Thyroid gland (tissue), 4 donors: ENCODE measurements at regions of chr2 and their contacts with region 1.

Region 1: DNA sequence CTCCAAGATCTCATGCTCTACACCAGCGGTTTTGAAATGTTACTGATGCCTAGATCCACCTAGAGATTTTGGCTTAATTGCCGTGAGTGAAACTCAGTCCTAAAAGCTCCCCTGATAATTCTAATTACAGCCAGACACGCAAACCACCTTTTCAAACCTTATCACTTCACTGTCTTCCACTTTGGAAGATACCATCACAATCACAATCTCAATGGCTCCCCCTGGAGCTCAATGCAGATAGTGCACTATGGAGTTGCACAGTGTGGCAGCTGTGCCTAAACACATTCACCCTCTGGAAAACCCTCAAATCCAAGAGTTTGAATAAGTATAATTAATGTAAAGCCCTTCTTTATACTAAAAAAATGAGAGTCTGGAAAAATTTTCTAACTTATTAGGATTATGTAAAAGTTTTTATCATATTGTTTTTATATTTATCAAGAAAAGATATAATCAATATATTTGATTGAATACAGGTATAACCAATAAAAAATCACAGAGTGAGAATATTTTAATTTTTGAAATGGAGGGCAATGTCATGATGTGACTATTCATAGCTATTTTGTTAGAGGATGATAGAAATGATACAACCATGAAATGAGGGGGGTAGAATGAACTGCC is 102.9 kb upstream of the SLC8A1 start:
- DNase-seq: peak; percentile 65 to 72
- H3K4me3 ChIP-seq: no peak overlapping the region
- H3K27ac ChIP-seq: no peak overlapping the region
- H3K4me1 ChIP-seq: no peaks in the 10 kb centered on the region
- H3K27me3 ChIP-seq: no peaks in the 10 kb centered on the region
- CTCF ChIP-seq: peak; percentile 56 to 92 (median 82)
- POLR2A ChIP-seq: no peak

Region 2: DNA sequence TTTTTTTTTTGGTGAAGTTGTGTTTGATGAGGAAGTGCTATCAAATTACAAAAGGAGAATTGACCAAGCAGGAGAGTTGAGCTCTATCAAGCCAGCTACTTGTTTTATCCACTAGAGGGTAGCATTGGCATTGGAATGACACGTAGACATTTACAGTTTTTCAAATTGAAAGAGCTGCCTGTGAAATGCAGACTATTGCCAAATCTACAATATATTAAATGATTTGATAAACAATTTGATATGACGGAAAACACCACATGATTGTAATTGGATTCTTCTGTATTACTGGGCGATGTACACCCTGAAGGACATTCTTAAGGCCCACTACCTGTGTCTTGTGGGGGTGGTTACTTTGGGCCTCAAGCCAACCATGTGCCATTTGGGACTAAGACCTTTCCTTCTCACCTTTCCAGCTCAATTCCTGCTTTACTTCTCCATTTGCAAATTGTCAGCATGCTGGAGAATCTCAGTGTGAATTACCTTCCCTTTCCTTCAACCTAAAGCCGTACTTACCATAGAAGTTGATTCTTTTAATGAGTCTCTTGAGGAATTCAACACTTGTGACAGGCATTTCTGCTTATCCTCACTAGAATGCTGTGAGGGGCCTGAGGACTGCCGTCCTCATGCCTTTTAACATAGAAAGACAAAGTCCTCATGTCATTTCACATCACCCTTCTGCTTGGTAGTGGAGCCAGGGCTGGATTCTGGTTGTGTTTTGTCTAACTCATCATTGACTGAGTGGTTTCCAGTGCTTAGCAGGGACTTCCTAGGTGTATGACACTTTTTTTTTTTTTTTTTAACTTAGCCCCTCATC is 640.9 kb before region 1 on chr2:
- intact Hi-C with region 1: loop called (anchors 5 kb)
- DNase-seq: peak in 1 of 2 donors; percentile 7
- H3K4me3 ChIP-seq: no peak overlapping the region
- H3K27ac ChIP-seq: no peak overlapping the region
- H3K4me1 ChIP-seq: no peaks in the 10 kb centered on the region
- H3K27me3 ChIP-seq: no peaks in the 10 kb centered on the region
- CTCF ChIP-seq: peak; percentile 41 to 84 (median 69)
- POLR2A ChIP-seq: no peak

Region 3: GRCh38 chr2:40658941-40659340 is 104.2 kb after region 1 on chr2:
- intact Hi-C with region 1: no loop called
- DNase-seq: no peak
- H3K4me3 ChIP-seq: no peak overlapping the region
- H3K27ac ChIP-seq: no peak overlapping the region
- H3K4me1 ChIP-seq: no peaks in the 10 kb centered on the region
- H3K27me3 ChIP-seq: no peaks in the 10 kb centered on the region
- CTCF ChIP-seq: no peak
- POLR2A ChIP-seq: no peak

Region 4: GRCh38 chr2:40877734-40878288 is 323.0 kb after region 1 on chr2:
- intact Hi-C with region 1: no loop called
- DNase-seq: no peak
- H3K4me3 ChIP-seq: no peak overlapping the region
- H3K27ac ChIP-seq: no peak overlapping the region
- H3K4me1 ChIP-seq: no peaks in the 10 kb centered on the region
- H3K27me3 ChIP-seq: no peaks in the 10 kb centered on the region
- CTCF ChIP-seq: no peak
- POLR2A ChIP-seq: no peak